Sigmoid colon (tissue), 7 donors: ENCODE measurements at regions of chr3 and their contacts with region 1.

Region 1: GRCh38 chr3:141311496-141312353 is 56.6 kb upstream of the ZBTB38 start:
- DNase-seq: peak; percentile 99
- H3K4me3 ChIP-seq: peak overlapping the region; percentile 56 to 68 (median 59)
- H3K27ac ChIP-seq: peak overlapping the region; percentile 73 to 84 (median 77)
- H3K4me1 ChIP-seq: peaks cover 0 to 19% (median 14%) of the 10 kb centered on the region in 4 donors
- H3K27me3 ChIP-seq: no peaks in the 10 kb centered on the region
- CTCF ChIP-seq: peak; percentile 51 to 75 (median 69)
- EP300 ChIP-seq: peak in 1 of 4 donors; percentile 77
- POLR2A ChIP-seq: peak; percentile 18 to 33

Region 2: GRCh38 chr3:141360888-141361598 is 49.3 kb after region 1 on chr3:
- intact Hi-C with region 1: loop called (anchors 2 kb)
- DNase-seq: no peak
- H3K4me3 ChIP-seq: peak overlapping the region in 2 of 4 donors; percentile 6 to 28
- H3K27ac ChIP-seq: peak overlapping the region; percentile 42 to 70 (median 63)
- H3K4me1 ChIP-seq: peaks cover 0 to 16% (median 15%) of the 10 kb centered on the region in 4 donors
- H3K27me3 ChIP-seq: no peaks in the 10 kb centered on the region
- CTCF ChIP-seq: peak; percentile 61 to 87 (median 76)
- EP300 ChIP-seq: no peak
- POLR2A ChIP-seq: no peak